Heart right ventricle (tissue), 16 donors: ENCODE measurements at regions of chr19 and their contacts with region 1.

Region 1: DNA sequence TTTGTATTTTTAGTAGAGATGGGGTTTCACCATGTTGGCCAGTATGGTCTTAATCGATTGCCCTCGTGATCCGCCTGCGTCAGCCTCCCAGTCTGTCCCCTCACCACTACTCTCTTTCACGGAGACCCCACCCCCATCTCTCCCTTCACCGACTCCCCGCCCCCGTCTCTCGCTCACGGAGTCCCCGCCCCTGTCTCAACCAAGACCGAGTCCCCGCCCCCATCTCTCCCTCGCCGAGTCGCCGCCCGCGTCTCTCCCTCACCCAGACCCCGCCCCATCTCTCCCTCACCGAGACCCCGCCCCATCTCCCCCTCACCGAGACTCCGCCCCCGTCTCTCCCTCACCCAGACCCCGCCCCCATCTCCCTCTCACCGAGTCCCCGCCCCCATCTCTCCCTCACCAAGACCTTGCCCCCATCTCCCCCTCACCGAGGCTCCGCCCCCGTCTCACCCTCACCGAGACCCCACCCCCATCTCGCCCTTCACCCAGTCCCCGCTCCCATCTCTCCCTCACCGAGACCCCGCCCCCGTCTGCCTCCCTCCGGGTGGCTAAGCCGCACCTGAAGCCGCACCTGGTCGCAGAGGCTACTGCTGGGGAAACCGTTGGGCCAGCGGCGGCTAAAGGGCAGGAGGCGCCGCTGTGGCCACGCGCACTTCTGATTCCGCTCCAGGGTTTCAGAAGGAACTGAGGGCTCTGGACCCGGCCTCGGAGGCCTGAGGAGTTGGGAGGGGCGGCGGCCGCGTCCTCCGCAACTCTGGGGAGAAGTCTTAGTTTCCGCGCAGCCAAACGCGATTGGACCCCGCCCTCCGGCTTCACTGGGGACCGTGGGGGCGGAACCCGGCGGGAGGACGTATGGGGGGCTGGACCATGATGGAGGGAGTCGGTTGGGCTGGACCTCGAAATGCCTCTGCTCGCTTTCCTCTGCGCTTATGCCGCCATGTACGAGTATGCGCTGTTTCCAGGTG is 17.1 kb upstream of the ZNF846 start:
- DNase-seq: peak; percentile 97 to 99
- ATAC-seq: peak; percentile 92 to 96 (median 94)
- H3K4me3 ChIP-seq: peak overlapping the region; percentile 61 to 97 (median 76)
- H3K27ac ChIP-seq: peak overlapping the region; percentile 87 to 99 (median 95)
- H3K4me1 ChIP-seq: peaks cover 0 to 29% (median 18%) of the 10 kb centered on the region in 9 donors
- H3K27me3 ChIP-seq: no peaks in the 10 kb centered on the region
- CTCF ChIP-seq: no peak

Region 2: DNA sequence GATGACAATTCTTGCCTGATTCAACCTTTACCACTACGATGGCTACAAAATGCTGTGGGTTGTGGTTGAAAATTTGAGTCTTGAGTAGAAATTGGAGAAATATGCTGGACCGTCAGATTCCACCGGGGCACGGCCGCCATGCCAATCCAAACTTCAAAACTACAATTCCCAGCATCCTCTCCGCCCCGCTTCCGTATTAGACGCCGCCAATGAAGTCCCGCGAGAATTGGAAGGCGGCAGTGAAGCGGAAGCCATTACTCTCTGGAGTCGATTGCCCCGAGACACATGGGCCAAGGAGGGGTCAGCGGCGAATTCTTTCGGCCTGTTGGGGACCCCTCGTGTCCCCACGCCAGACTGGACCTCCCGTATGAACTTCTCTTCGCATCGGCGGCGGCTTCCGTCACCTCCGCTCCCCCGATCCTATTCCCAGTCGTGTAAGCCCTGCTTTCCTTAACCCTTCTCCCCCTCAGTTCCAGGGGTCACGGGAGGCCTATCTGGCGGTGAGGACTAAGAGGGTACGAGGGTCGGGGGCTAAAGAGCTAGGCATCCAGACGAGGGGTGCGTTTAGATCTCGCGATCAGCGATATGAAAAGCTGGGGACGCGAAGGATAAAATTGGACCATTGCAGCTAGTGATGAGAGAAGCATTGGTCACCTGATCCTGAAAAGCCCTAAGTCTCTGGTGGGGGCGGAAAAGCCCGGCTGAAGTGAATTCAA is 645.3 kb before region 1 on chr19 and contains the start of gene ZNF317:
- intact Hi-C with region 1: loop called in 7 of 10 experiments (anchors 5 to 10 kb)
- DNase-seq: peak; percentile 88 to 95
- ATAC-seq: peak; percentile 97 to 99 (median 98)
- H3K4me3 ChIP-seq: peak within 1 kb of the TSS; percentile 64 to 95 (median 84)
- H3K27ac ChIP-seq: peak within 1 kb of the TSS; percentile 59 to 94 (median 90)
- H3K4me1 ChIP-seq: peaks cover 0 to 30% (median 21%) of the 10 kb centered on the region in 9 donors
- H3K27me3 ChIP-seq: no peaks in the 10 kb centered on the region
- CTCF ChIP-seq: no peak
- total RNA-seq, gene ZNF317: 13.4 to 17.8 (median 15.7) TPM

Region 3: DNA sequence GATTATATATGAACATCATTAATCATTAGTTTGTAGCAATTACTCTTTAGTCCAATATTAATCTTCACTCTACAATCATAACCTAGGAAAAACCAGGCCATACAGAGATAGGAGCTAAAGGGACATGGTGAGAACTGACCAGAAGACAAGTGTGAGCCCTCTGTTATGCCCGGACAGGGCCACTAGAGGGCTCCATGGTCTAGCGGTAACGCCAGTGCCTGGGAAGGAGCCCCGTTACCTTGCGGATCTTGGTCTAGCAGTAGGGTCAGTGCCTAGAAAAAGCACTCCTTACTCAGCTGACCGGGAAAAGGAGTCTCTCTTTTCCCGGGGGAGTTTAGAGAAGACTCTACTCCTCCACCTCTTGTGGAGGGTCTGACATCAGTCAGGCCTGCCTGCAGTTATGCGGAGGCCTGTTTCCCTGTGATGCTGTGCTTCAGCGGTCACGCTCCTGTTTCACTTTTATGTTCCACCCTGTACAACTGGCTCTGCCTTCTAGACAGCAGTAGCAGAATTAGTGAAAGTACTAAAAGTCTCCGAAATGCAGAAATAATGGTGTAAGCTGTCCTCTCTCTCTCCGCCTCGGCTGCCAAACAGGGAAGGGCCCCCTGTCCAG is 580.0 kb before region 1 on chr19:
- intact Hi-C with region 1: loop called in 5 of 10 experiments (anchors 5 to 10 kb)
- DNase-seq: peak; percentile 64 to 67
- ATAC-seq: peak in 7 of 8 donors; percentile 58 to 74 (median 69)
- H3K4me3 ChIP-seq: peak overlapping the region in 7 of 10 donors; percentile 27 to 48 (median 42)
- H3K27ac ChIP-seq: no peak overlapping the region
- H3K4me1 ChIP-seq: peaks cover 0 to 4% (median 0%) of the 10 kb centered on the region in 9 donors
- H3K27me3 ChIP-seq: peaks cover 0 to 42% (median 18%) of the 10 kb centered on the region in 7 donors
- CTCF ChIP-seq: peak; percentile 55 to 95 (median 90)

Region 4: GRCh38 chr19:9354651-9355050 is 431.0 kb before region 1 on chr19:
- intact Hi-C with region 1: no loop called
- DNase-seq: no peak
- ATAC-seq: no peak
- H3K4me3 ChIP-seq: no peak overlapping the region
- H3K27ac ChIP-seq: no peak overlapping the region
- H3K4me1 ChIP-seq: no peaks in the 10 kb centered on the region
- H3K27me3 ChIP-seq: no peaks in the 10 kb centered on the region
- CTCF ChIP-seq: no peak

Region 5: GRCh38 chr19:9674663-9675357 is 110.8 kb before region 1 on chr19 and contains the start of gene ZNF562:
- intact Hi-C with region 1: loop called in 2 of 10 experiments (anchors 10 kb)
- DNase-seq: peak; percentile 88 to 90
- ATAC-seq: peak; percentile 97 to 99 (median 98)
- H3K4me3 ChIP-seq: peak within 1 kb of the TSS; percentile 55 to 93 (median 74)
- H3K27ac ChIP-seq: peak within 1 kb of the TSS; percentile 84 to 98 (median 96)
- H3K4me1 ChIP-seq: peaks cover 0 to 17% (median 4%) of the 10 kb centered on the region in 9 donors
- H3K27me3 ChIP-seq: no peaks in the 10 kb centered on the region
- CTCF ChIP-seq: no peak
- total RNA-seq, gene ZNF562: 18.8 to 24.3 (median 21.5) TPM

Region 6: GRCh38 chr19:9768175-9769112 is 17.2 kb before region 1 on chr19 and contains the start of gene ZNF846:
- intact Hi-C with region 1: loop called in 1 of 10 experiments (anchors 1 kb)
- DNase-seq: peak; percentile 91 to 94
- ATAC-seq: peak; percentile 98 to 100 (median 99)
- H3K4me3 ChIP-seq: peak within 1 kb of the TSS; percentile 55 to 90 (median 76)
- H3K27ac ChIP-seq: peak within 1 kb of the TSS; percentile 82 to 96 (median 93)
- H3K4me1 ChIP-seq: peaks cover 0 to 19% (median 14%) of the 10 kb centered on the region in 9 donors
- H3K27me3 ChIP-seq: no peaks in the 10 kb centered on the region
- CTCF ChIP-seq: no peak
- total RNA-seq, gene ZNF846: 6.2 to 16.2 (median 10.1) TPM